Panc1 (cell line): ENCODE measurements at regions of chr14 and their contacts with region 1.

Region 1: GRCh38 chr14:90235179-90235976 is 21.0 kb upstream of the PSMC1 start:
- DNase-seq: peak; percentile 60
- ATAC-seq: peak; percentile 91
- H3K4me3 ChIP-seq: no peak overlapping the region
- H3K27ac ChIP-seq: no peak overlapping the region
- H3K4me1 ChIP-seq: no peaks in the 10 kb centered on the region
- H3K27me3 ChIP-seq: no peaks in the 10 kb centered on the region
- CTCF ChIP-seq: peak; percentile 91

Region 2: DNA sequence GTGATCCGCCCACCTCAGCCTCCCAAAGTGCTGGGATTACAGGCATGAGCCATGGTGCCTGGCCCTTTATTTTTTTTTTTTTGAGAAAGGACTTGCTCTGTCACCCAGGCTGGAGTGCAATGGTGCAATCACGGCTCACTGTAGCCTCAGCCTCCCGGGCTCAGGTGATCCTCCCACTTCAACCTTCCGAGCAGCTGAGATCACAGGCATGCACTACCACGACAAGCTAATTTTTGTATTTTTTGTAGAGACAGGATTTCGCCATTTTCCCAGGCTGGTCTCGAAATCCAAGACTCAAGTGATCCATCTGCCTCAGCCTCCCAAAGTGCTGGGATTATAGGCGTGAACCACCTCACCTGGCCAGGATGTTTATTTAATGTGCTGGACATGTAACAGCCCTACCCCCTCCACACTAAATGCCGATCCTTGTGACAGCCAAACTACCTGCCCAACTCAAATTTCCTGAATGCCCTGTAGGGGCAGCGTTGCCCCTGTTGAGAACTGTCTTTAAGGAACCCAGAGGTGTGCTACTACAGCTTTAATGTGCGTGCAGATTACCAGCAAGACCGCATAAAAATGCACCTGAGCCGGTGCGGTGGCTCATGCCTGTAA is 125.6 kb before region 1 on chr14:
- CTCF ChIA-PET with region 1: no interaction called
- POLR2A ChIA-PET with region 1: no interaction called
- in situ Hi-C with region 1: no loop called
- intact Hi-C with region 1: loop called (anchors 5 kb)
- DNase-seq: no peak
- ATAC-seq: no peak
- H3K4me3 ChIP-seq: no peak overlapping the region
- H3K27ac ChIP-seq: no peak overlapping the region
- H3K4me1 ChIP-seq: no peaks in the 10 kb centered on the region
- H3K27me3 ChIP-seq: peaks cover 5% of the 10 kb centered on the region; the same call in 1 of the 2 replicates
- CTCF ChIP-seq: peak; percentile 43

Region 3: GRCh38 chr14:90193925-90194324 is 41.5 kb before region 1 on chr14:
- CTCF ChIA-PET with region 1: interaction called, 16 read pairs
- POLR2A ChIA-PET with region 1: no interaction called
- in situ Hi-C with region 1: no loop called
- intact Hi-C with region 1: no loop called
- DNase-seq: no peak
- ATAC-seq: no peak
- H3K4me3 ChIP-seq: no peak overlapping the region
- H3K27ac ChIP-seq: no peak overlapping the region
- H3K4me1 ChIP-seq: no peaks in the 10 kb centered on the region
- H3K27me3 ChIP-seq: no peaks in the 10 kb centered on the region
- CTCF ChIP-seq: peak; percentile 69

Region 4: GRCh38 chr14:90475298-90475697 is 239.9 kb after region 1 on chr14:
- CTCF ChIA-PET with region 1: no interaction called
- POLR2A ChIA-PET with region 1: no interaction called
- in situ Hi-C with region 1: no loop called
- intact Hi-C with region 1: no loop called
- DNase-seq: no peak
- ATAC-seq: no peak
- H3K4me3 ChIP-seq: no peak overlapping the region
- H3K27ac ChIP-seq: no peak overlapping the region
- H3K4me1 ChIP-seq: no peaks in the 10 kb centered on the region
- H3K27me3 ChIP-seq: no peaks in the 10 kb centered on the region
- CTCF ChIP-seq: no peak